Heart right ventricle (tissue), 16 donors: ENCODE measurements at regions of chr16 and their contacts with region 1.

Region 1: DNA sequence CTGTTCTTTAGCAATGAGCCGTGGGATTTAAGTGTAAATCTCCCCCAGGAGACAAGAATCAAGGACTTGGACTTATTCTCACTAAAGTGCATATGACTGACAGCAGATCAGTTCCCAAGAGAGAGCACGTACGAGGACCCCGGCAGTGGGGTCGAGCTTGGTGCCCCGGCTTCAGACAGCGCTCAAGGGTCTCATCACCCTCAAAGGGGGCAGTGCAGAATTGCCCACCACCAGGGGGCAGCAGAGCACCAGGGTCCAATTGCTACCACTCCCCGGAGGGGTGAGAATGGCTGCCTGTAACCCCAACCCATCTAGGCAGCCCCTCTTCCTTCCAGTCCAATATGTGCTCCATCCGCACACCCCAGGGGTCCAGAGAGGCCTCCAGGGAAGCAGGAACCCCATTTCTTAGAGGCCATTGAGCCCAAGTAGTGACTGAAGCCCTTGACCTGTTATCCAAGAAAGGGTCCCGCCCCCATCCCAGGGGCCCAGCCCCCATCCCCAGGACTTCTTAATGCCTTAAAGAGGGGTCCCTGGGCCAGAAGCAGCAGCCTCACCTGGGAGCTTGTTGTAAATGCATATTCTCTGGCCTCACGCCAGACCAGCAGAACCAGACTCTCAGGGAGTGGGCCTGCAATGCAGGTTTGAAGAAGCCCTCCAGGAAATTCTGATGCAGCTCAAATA is 86.1 kb downstream of the ZDHHC7 start:
- DNase-seq: peak; percentile 59 to 79
- ATAC-seq: no peak
- H3K4me3 ChIP-seq: no peak overlapping the region
- H3K27ac ChIP-seq: peak overlapping the region in 7 of 10 donors; percentile 25 to 85 (median 76)
- H3K4me1 ChIP-seq: peaks cover 10 to 73% (median 59%) of the 10 kb centered on the region in 9 donors
- H3K27me3 ChIP-seq: no peaks in the 10 kb centered on the region
- CTCF ChIP-seq: peak; percentile 70 to 93 (median 80)

Region 2: GRCh38 chr16:84832488-84833143 is 92.6 kb before region 1 on chr16:
- intact Hi-C with region 1: loop called in 2 of 10 experiments (anchors 5 kb)
- DNase-seq: peak; percentile 75 to 81
- ATAC-seq: peak; percentile 29 to 86 (median 68)
- H3K4me3 ChIP-seq: peak overlapping the region in 6 of 10 donors; percentile 3 to 43 (median 24)
- H3K27ac ChIP-seq: peak overlapping the region; percentile 46 to 83 (median 76)
- H3K4me1 ChIP-seq: peaks cover 0 to 74% (median 55%) of the 10 kb centered on the region in 9 donors
- H3K27me3 ChIP-seq: peaks cover 0 to 4% (median 0%) of the 10 kb centered on the region in 7 donors
- CTCF ChIP-seq: no peak

Region 3: DNA sequence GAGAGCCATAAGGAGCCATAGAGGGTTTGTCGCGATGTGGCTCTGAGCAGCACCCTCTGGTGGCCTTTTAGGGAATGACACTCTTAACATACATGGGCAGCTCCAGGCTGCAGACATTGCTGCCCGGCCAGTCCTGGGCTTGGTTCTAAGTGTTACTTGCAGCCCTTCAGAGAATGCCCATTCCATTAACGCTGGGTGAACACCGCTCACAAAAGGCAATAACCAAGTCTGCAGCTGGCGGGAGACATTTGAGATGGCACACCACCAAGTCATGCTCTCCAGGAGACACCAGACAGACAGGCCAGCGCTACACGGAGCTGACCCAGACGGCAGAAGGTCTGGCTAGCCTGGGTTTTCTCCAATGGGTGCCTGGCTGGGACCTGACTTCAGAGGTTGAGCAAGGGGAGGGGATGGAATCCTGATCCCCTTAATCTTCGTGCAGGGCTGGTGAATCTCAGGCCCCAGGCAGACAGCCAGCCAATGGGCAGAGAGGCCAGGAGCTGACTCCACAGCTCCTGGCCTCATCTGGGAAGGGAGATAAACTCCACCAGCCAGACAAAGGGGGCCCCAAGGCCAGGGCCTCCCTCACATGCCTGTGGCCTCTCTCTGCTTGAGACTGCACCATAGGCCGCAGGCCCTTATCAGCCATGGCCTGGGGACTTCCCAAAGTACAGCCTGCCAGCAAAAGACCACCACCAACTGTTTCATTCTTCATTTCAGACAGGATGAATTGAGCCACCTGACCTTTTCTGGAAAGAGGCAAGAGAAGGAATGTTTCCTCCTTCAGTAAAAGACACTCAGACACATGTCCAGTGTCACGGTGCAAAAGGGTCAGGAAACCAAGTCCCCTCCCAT is 27.3 kb after region 1 on chr16:
- intact Hi-C with region 1: loop called in 3 of 10 experiments (anchors 1 to 2 kb)
- DNase-seq: peak; percentile 50 to 81
- ATAC-seq: peak; percentile 88 to 94 (median 92)
- H3K4me3 ChIP-seq: no peak overlapping the region
- H3K27ac ChIP-seq: peak overlapping the region in 9 of 10 donors; percentile 10 to 82 (median 54)
- H3K4me1 ChIP-seq: peaks cover 3 to 22% (median 17%) of the 10 kb centered on the region in 9 donors
- H3K27me3 ChIP-seq: no peaks in the 10 kb centered on the region
- CTCF ChIP-seq: peak; percentile 70 to 96 (median 92)

Region 4: DNA sequence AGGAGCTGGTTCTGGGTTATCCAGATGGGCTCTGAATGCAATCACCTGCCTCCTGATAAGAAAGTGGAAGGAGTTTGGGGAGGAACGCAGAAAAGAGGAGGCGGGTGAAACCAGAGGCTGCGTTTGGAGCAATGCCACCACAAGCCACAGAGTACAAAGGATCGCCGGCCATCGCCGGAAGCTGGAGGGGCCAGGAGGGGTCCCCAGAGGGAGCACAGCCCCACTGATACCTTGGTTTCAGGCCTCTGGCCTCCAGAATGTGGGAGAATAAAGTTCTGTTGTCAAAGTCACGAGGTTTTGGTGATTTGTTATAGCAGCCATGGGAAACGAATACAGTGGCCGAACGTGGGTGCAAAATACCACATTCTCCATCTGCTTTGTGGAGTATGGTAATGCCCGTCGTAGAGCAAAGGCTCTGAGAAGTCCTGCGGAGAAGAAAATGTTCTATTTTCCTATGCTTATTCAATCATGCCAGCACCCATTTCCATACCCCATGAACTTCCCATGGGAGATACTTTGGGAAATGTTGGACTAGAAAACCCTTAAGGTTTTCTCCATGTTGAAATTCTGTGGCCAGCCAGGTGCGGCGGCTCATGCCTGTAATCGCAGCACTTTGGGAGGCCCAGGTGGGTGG is 34.7 kb after region 1 on chr16:
- intact Hi-C with region 1: loop called in 1 of 10 experiments (anchors 5 kb)
- DNase-seq: no peak
- ATAC-seq: no peak
- H3K4me3 ChIP-seq: no peak overlapping the region
- H3K27ac ChIP-seq: no peak overlapping the region
- H3K4me1 ChIP-seq: no peaks in the 10 kb centered on the region
- H3K27me3 ChIP-seq: peaks cover 0 to 9% (median 0%) of the 10 kb centered on the region in 7 donors
- CTCF ChIP-seq: no peak